Activated CD4-positive, alpha-beta memory T cell treated with anti-CD3 and anti-CD28 coated beads for 36 hours (primary cell): ENCODE measurements at regions of chrX and their contacts with region 1.

Region 1: GRCh38 chrX:16826207-16826606 is 39.9 kb downstream of the TXLNG start:
- DNase-seq: no peak
- H3K4me3 Mint-ChIP-seq: no peak overlapping the region
- H3K27ac Mint-ChIP-seq: peak overlapping the region; percentile 74
- H3K4me1 Mint-ChIP-seq: peaks cover 22% of the 10 kb centered on the region
- H3K27me3 Mint-ChIP-seq: no peaks in the 10 kb centered on the region

Region 2: DNA sequence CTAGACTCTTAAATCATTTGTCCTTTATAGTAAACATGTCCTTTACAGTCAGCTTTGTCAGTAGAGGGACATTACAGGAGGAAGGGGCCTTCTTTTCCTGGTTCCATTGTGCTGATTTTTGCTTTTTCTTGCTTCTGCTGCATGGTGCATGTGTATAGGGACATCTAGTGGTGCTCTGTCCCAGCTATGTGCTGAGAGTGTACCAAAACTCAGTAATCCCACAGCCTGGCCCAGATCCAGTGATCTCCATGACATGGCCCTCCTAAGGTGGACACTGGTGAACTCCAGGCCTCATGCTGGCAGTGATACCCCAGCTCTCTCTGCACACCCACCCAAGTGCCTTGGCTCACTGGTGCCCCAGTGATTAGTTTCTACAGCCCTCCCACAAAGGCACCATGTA is 613.8 kb before region 1 on chrX:
- CTCF ChIA-PET with region 1: no interaction called
- POLR2A ChIA-PET with region 1: no interaction called
- intact Hi-C with region 1: no loop called
- DNase-seq: no peak
- H3K4me3 Mint-ChIP-seq: no peak overlapping the region
- H3K27ac Mint-ChIP-seq: no peak overlapping the region
- H3K4me1 Mint-ChIP-seq: no peaks in the 10 kb centered on the region
- H3K27me3 Mint-ChIP-seq: no peaks in the 10 kb centered on the region

Region 3: DNA sequence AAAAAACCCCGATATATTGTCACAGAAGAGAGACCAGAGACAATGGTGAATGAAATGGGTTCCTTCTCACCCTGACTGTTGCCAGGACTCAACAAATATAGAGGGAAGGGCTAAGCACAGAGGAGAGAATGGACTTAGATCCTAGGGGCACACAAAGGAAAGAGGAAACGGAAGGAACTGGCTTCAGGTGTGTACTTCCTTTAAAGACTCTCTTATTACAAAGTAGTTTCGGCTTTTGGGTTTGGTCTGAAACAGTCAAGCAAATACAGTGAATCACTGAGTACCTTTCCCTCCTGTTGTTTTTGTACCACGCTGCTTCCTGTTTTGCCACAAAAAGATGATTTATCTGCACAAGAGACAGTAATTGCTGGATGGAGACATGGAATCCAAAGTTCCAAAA is 222.4 kb before region 1 on chrX:
- CTCF ChIA-PET with region 1: no interaction called
- POLR2A ChIA-PET with region 1: no interaction called
- intact Hi-C with region 1: loop called (anchors 10 kb)
- DNase-seq: peak; percentile 9
- H3K4me3 Mint-ChIP-seq: peak overlapping the region; percentile 10
- H3K27ac Mint-ChIP-seq: peak overlapping the region; percentile 84
- H3K4me1 Mint-ChIP-seq: peaks cover 28% of the 10 kb centered on the region
- H3K27me3 Mint-ChIP-seq: no peaks in the 10 kb centered on the region

Region 4: DNA sequence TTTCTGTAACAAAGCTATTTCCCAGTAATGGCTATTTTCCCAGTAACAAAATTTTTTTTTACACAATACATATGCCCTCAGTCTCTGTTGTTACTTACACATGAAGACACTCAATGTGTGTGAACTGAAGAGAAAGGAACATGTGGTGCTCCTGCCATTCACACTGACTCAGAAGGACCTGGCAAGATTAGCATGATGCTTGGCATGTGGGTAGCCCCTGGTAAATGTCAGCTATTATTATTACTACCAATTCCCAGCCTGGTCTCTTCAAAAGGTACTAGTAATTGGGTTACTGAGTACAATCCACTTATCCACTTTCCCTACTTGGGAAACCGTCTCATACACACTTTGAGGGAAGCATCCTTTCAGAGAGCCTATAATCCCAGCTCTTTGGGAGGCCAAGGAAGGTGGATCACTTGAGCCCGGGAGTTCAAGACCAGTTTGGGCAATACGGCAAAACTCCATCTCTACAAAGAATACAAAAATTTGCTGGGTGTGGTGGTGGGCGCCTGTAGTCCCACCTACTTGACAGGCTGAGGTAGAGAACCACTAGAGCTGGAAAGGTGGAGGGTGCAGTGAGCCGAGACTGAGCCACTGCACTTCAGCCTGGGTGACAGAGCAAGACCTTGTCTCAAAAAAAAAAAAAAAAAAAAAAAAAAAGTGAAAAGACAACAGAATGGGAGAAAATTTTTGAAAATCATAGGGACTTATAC is 29.3 kb after region 1 on chrX:
- CTCF ChIA-PET with region 1: interaction called, 3 read pairs
- POLR2A ChIA-PET with region 1: no interaction called
- intact Hi-C with region 1: loop called (anchors 2 kb)
- DNase-seq: no peak
- H3K4me3 Mint-ChIP-seq: no peak overlapping the region
- H3K27ac Mint-ChIP-seq: peak overlapping the region; percentile 79
- H3K4me1 Mint-ChIP-seq: peaks cover 70% of the 10 kb centered on the region
- H3K27me3 Mint-ChIP-seq: no peaks in the 10 kb centered on the region

Region 5: GRCh38 chrX:16892504-16893362 is 66.5 kb after region 1 on chrX:
- CTCF ChIA-PET with region 1: interaction called, 12 read pairs
- POLR2A ChIA-PET with region 1: no interaction called
- intact Hi-C with region 1: loop called (anchors 1 kb)
- DNase-seq: peak; percentile 69
- H3K4me3 Mint-ChIP-seq: no peak overlapping the region
- H3K27ac Mint-ChIP-seq: peak overlapping the region; percentile 21
- H3K4me1 Mint-ChIP-seq: peaks cover 19% of the 10 kb centered on the region
- H3K27me3 Mint-ChIP-seq: peaks cover 2% of the 10 kb centered on the region

Region 6: GRCh38 chrX:17441965-17442364 is 615.8 kb after region 1 on chrX:
- CTCF ChIA-PET with region 1: no interaction called
- POLR2A ChIA-PET with region 1: no interaction called
- intact Hi-C with region 1: loop called (anchors 10 kb)
- DNase-seq: peak; percentile 10
- H3K4me3 Mint-ChIP-seq: no peak overlapping the region
- H3K27ac Mint-ChIP-seq: no peak overlapping the region
- H3K4me1 Mint-ChIP-seq: peaks cover 4% of the 10 kb centered on the region
- H3K27me3 Mint-ChIP-seq: no peaks in the 10 kb centered on the region